IMR-90 (cell line): ENCODE measurements at regions of chr5 and their contacts with region 1.

Region 1: GRCh38 chr5:43839218-43839617 is 236.2 kb downstream of the NNT start:
- DNase-seq: peak; percentile 91
- ATAC-seq: peak; percentile 86
- H3K4me3 ChIP-seq: no peak overlapping the region
- H3K27ac ChIP-seq: peak overlapping the region; percentile 88; the same call in 1 of the 2 replicates
- H3K4me1 ChIP-seq: peaks cover 5% of the 10 kb centered on the region; the same call in 1 of the 2 replicates
- H3K27me3 ChIP-seq: no peaks in the 10 kb centered on the region
- CTCF ChIP-seq: no peak
- POLR2A ChIP-seq: no peak
- RAD21 ChIP-seq: no peak

Region 2: GRCh38 chr5:43772764-43773477 is 66.3 kb before region 1 on chr5:
- CTCF ChIA-PET with region 1: no interaction called
- POLR2A ChIA-PET with region 1: no interaction called
- dilution Hi-C with region 1: no loop called
- in situ Hi-C with region 1: no loop called
- intact Hi-C with region 1: loop called (anchors 1 kb)
- DNase-seq: peak; percentile 73
- ATAC-seq: peak; percentile 21; the same call in 1 of the 2 replicates
- H3K4me3 ChIP-seq: no peak overlapping the region
- H3K27ac ChIP-seq: peak overlapping the region; percentile 91
- H3K4me1 ChIP-seq: peaks cover 8% of the 10 kb centered on the region
- H3K27me3 ChIP-seq: no peaks in the 10 kb centered on the region
- CTCF ChIP-seq: no peak
- POLR2A ChIP-seq: no peak
- RAD21 ChIP-seq: no peak

Region 3: DNA sequence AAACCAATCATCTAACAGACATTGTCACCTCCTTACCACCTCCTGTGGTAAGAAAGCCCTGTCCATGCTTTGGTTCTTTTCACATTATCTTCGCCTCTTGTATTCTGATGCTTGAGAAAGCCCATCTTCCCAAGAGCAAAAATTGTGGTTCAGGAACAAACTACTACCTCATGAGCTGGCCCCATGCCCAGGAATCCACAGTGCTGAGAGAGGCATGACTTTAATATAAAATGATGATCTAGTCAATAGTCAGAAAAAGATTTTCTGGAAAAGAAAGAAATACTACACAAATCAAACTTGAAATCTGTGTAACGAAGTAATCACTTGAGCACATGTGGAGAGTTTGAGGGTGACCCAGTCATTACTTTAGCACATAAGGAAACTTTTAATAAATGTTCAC is 455.3 kb after region 1 on chr5:
- CTCF ChIA-PET with region 1: no interaction called
- POLR2A ChIA-PET with region 1: no interaction called
- dilution Hi-C with region 1: no loop called
- in situ Hi-C with region 1: no loop called
- intact Hi-C with region 1: no loop called
- DNase-seq: no peak
- ATAC-seq: no peak
- H3K4me3 ChIP-seq: no peak overlapping the region
- H3K27ac ChIP-seq: no peak overlapping the region
- H3K4me1 ChIP-seq: no peaks in the 10 kb centered on the region
- H3K27me3 ChIP-seq: no peaks in the 10 kb centered on the region
- CTCF ChIP-seq: no peak
- POLR2A ChIP-seq: no peak
- RAD21 ChIP-seq: no peak